Activated T-helper 2 cell treated with anti-CD3 and anti-CD28 coated beads, Interferon-gamma antibody, Interleukin-2, Interleukin-4, amounts not matched to agents 10 μg/mL and 5 μg/mL and 100 μg/mL, durations not matched to agents 14 hours and 24 hours and 36 hours (primary cell): ENCODE measurements at regions of chr5 and their contacts with region 1.

Region 1: GRCh38 chr5:14436801-14437542 is 144.6 kb upstream of the OTULINL start:
- DNase-seq: no peak
- H3K4me3 Mint-ChIP-seq: no peak overlapping the region
- H3K27ac Mint-ChIP-seq: peak overlapping the region; percentile 62
- H3K4me1 Mint-ChIP-seq: peaks cover 32% of the 10 kb centered on the region
- H3K27me3 Mint-ChIP-seq: peaks cover 2% of the 10 kb centered on the region

Region 2: GRCh38 chr5:14399054-14399692 is 37.8 kb before region 1 on chr5:
- intact Hi-C with region 1: no loop called
- DNase-seq: no peak
- H3K4me3 Mint-ChIP-seq: no peak overlapping the region
- H3K27ac Mint-ChIP-seq: no peak overlapping the region
- H3K4me1 Mint-ChIP-seq: peaks cover 38% of the 10 kb centered on the region
- H3K27me3 Mint-ChIP-seq: peaks cover 2% of the 10 kb centered on the region

Region 3: DNA sequence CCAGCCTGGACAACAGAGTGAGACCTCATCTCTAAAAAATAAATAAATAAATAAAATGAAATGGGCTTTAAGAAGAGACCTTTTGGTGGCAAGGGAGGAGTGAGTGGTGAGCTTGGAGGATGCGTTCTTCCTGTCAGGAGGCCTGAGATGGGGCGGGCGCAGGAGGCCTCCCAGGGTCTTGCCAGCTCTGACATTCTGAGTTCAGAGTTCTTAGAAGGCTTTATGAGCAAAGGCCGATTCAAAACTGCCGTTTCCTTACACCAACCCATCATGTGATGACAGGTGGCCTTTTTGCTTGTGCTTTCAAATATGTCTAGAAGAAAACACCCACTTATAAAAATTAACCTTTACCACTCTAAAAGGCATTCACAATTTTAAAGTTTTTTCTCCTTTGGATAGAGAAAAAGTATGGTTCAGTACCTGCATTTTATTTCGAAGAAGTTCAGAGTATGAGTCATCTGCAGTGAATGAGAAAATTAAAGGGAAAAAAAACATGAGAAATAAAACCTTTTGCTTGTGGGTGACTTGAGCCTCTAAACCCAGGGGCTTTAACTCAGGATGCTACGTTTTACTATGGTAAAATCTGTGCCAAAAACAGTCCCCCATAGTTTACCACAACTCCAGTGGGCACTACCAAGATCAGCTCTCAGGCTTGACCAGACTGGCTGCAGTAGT is 12.8 kb before region 1 on chr5:
- intact Hi-C with region 1: loop called (anchors 1 kb)
- DNase-seq: no peak
- H3K4me3 Mint-ChIP-seq: no peak overlapping the region
- H3K27ac Mint-ChIP-seq: peak overlapping the region; percentile 87
- H3K4me1 Mint-ChIP-seq: peaks cover 30% of the 10 kb centered on the region
- H3K27me3 Mint-ChIP-seq: no peaks in the 10 kb centered on the region

Region 4: DNA sequence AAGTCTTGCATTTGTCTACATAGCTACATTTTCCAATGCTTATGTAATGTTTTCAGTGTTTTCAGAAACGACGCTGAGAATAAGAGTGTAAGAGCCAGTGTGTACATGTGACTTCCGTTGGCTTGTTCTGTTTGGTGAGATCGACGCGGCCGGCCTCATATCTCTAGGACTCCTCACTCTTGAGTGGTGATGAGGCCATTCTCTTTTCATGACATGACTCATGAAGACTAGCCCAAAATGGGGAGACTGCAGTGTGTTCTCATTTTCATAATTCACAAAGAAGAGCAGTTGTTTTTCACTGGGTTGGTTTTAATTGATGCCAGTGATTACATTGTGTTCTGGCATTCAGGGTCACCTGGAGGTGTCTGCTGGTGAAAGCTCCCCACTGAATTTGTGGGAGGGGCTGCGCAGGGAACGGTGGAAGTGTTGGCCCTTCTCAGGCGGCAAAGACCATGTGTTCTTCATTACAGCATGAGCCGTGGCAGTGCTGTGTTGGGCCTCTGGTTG is 13.1 kb after region 1 on chr5:
- intact Hi-C with region 1: loop called (anchors 1 kb)
- DNase-seq: no peak
- H3K4me3 Mint-ChIP-seq: no peak overlapping the region
- H3K27ac Mint-ChIP-seq: peak overlapping the region; percentile 70
- H3K4me1 Mint-ChIP-seq: peaks cover 13% of the 10 kb centered on the region
- H3K27me3 Mint-ChIP-seq: no peaks in the 10 kb centered on the region

Region 5: DNA sequence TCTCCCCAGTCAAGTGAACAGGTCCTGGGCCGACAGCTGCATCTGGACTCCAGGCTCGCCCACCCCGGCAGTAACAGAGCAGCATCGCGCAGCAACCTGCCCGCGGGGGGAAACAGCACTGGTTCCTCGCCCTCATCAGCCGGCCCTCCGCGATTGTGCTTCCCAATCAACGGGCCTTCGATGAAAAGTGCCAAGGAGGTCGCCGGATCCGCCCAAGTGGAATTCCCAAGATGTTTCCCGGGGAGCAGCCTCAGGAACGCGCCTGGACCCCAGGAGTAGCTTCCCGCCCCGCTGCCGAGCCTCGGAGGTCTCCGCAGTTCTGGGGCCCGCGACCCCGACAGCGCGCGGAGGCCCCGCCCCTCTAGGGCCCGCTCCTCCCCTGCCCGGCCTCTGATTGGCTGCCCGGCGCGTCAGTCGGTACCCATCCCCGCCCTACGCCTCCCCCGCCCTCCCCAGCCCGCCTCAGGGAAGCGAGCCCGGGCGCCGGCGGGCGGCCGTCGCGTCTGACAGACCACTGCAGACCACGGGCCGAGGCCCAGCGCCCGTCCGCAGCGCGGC is 144.4 kb after region 1 on chr5 and contains the start of gene OTULINL:
- intact Hi-C with region 1: no loop called
- DNase-seq: peak; percentile 78
- H3K4me3 Mint-ChIP-seq: peak within 1 kb of the TSS; percentile 78
- H3K27ac Mint-ChIP-seq: peak within 1 kb of the TSS; percentile 28
- H3K4me1 Mint-ChIP-seq: peaks cover 23% of the 10 kb centered on the region
- H3K27me3 Mint-ChIP-seq: peaks cover 22% of the 10 kb centered on the region
- total RNA-seq, gene OTULINL: 17.0 and 20.9 TPM in 2 replicates